ENCODE measurements at regions of chr2 and their contacts with region 1.

Region 1: GRCh38 chr2:50529600-50530218 is 502.2 kb downstream of the NRXN1 start:
- DNase-seq: peak; percentile 71
- ATAC-seq: peak; percentile 92
- H3K4me3 ChIP-seq: no peak overlapping the region
- H3K27ac ChIP-seq: no peak overlapping the region
- H3K4me1 ChIP-seq: no peaks in the 10 kb centered on the region
- H3K27me3 ChIP-seq: no peaks in the 10 kb centered on the region
- CTCF ChIP-seq: peak; percentile 79
- POLR2A ChIP-seq: no peak
- RAD21 ChIP-seq: peak; percentile 79

Region 2: DNA sequence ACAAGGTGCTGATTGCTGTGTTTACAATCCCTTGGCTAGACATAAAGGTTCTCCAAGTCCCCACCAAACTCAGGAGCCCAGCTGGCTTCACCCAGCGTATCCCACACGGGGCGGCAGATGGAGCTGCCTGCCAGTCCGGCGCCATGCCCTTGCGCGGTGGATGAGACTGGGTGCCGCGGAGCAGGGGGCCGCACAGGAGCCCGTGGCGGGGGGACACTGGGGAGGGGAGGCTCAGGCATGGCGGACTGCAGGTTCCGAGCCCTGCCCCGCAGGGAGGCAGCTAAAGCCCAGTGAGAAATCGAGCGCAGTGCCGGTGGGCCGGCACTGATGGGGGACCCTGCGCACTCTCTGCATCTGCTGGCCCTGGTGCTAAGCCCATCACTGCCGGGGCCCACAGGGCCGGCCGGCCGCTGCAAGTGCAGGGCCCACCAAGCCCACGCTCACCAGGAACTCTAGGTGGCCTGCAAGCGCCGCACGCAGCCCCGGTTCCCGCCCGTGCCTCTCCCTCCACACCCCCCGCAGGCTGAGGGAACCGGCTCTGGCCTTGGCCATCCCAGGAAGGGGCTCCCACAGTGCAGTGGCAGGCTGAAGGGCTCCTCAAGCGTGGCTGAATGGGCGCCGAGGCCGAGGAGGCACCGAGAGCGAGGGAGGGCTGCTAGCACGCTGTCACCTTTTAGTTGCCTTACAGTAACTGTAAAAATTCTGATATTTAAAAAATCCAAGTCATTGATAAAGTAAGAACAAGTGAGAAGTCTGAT is 445.4 kb before region 1 on chr2:
- CTCF ChIA-PET with region 1: no interaction called
- POLR2A ChIA-PET with region 1: no interaction called
- dilution Hi-C with region 1: no loop called
- in situ Hi-C with region 1: no loop called
- intact Hi-C with region 1: no loop called
- DNase-seq: no peak
- ATAC-seq: no peak
- H3K4me3 ChIP-seq: no peak overlapping the region
- H3K27ac ChIP-seq: no peak overlapping the region
- H3K4me1 ChIP-seq: no peaks in the 10 kb centered on the region
- H3K27me3 ChIP-seq: no peaks in the 10 kb centered on the region
- CTCF ChIP-seq: no peak
- POLR2A ChIP-seq: no peak
- RAD21 ChIP-seq: no peak

Region 3: DNA sequence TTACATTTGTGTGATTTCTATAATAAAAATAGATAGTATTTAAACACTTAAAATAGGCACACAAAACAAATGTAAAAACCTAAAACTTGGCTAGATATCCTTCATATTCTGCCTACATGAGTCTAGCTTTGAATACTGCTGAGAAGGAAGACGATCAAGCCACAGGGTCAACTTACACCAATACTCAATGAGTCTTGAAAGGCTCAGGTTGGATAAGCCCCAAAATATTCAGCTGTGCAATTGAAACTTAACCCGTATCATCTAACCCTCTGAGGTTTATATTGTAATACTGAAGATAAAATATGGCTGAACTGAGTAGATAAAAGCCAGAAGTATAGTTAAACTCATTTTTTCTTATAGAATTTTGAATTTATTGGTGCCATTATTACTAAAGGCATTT is 815.2 kb after region 1 on chr2:
- CTCF ChIA-PET with region 1: no interaction called
- POLR2A ChIA-PET with region 1: no interaction called
- dilution Hi-C with region 1: no loop called
- in situ Hi-C with region 1: no loop called
- intact Hi-C with region 1: loop called (anchors 10 kb)
- DNase-seq: peak; percentile 7
- ATAC-seq: no peak
- H3K4me3 ChIP-seq: no peak overlapping the region
- H3K27ac ChIP-seq: no peak overlapping the region
- H3K4me1 ChIP-seq: no peaks in the 10 kb centered on the region
- H3K27me3 ChIP-seq: no peaks in the 10 kb centered on the region
- CTCF ChIP-seq: no peak
- POLR2A ChIP-seq: no peak
- RAD21 ChIP-seq: no peak

Measured in IMR-90 (cell line).